Left cardiac atrium (tissue), 4 donors: ENCODE measurements at regions of chr2 and their contacts with region 1.

Region 1: DNA sequence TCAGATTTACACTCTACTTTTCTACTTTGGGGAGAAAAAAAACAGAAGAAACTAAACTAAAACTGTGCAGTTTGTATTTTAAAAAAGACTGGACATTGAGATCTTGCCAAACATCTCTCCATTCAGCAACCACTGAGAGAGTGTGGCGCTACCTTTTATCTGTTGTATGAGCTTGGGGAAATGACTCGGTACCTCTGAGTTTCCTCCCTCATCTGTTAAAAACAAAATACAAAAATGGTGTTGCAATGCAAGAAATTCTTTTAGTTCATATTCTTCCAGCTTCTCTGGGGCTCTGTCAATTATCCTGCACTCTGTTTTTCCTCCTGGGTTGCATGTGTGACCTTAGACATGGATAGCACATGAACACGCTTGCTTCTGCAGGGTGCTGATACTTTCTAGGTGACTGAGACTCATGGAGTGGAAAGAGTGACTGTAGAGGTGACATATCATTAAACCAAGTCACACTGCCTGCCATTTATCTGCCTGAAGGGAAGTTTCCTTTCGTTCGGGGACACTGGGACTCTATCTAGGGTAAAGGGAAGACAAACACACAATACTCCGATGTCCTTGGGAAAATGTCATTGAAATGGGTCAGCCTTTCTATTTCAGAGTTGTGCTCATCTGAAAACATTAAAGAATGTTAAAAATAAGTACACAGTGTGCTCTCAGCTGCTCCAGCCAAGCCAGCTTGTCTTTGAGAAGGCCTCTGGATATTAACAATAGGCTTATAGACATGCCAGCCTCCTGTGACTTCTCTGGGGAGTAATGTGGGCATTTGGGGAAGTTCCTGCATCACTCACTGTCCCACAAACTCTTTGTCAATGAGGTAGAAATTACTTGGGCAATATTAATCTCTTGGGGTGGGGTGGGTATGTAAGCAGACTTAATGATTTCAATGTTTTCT is 91.4 kb downstream of the TRIB2 start:
- DNase-seq: peak; percentile 38
- ATAC-seq: peak; percentile 67 to 73

Region 2: GRCh38 chr2:12918835-12919445 is 110.8 kb after region 1 on chr2:
- intact Hi-C with region 1: loop called in 1 of 2 experiments (anchors 5 kb)
- DNase-seq: peak; percentile 83
- ATAC-seq: peak; percentile 88 to 94